Activated T-helper 1 cell treated with anti-CD3 and anti-CD28 coated beads, Interleukin-12 subunit alpha, Interleukin-12 subunit beta, Interleukin-2, Interleukin-4 antibody, amounts not matched to agents 30 ng/mL and 10 ng/mL and 1 ng/mL, durations not matched to agents 14 hours and 24 hours and 36 hours (primary cell): ENCODE measurements at regions of chr6 and their contacts with region 1.

Region 1: GRCh38 chr6:31079656-31080261 is 32.6 kb downstream of the C6orf15 start:
- DNase-seq: peak; percentile 58
- H3K4me3 Mint-ChIP-seq: no peak overlapping the region
- H3K27ac Mint-ChIP-seq: no peak overlapping the region
- H3K4me1 Mint-ChIP-seq: no peaks in the 10 kb centered on the region
- H3K27me3 Mint-ChIP-seq: peaks cover 17% of the 10 kb centered on the region

Region 2: DNA sequence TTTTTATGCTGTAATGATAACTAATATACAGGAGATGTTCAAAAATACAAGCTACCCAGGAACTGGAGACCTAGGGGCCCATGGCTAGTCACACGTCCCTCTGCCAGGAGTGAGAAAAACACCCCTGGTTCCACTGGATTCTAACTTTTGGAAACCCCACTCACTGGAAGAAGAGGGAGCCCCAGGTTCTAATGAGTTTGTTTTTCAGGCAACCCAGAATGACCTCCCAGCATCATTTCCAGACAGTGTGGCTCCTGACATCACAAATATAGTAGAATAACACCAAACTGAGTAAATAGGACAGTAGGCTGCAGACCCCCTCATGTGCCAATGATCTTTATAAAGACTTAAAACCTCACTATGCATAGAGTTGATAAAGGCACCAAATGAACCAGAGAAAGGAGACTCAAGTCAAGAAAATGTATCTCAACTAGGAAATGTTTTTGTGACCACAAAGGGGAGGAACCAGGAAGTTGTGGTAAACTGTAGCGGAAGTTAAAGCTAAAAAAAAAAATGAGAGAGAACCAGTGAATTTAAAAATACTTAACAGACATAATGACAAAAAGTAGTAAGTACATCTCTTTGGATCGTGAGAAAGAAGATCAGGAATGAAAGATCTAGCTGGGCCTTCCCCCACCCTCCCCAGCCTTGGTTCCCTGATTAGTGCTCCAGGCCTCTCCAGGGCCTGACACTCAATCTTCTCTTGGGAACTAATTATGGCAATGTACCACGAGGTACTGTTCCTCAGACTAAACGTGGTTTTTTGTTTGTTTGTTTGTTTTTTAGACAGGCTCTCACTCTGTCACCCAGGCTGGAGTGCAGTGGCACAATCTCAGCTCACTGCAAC is 570.6 kb before region 1 on chr6:
- intact Hi-C with region 1: no loop called
- DNase-seq: peak; percentile 53
- H3K4me3 Mint-ChIP-seq: peak overlapping the region; percentile 19
- H3K27ac Mint-ChIP-seq: peak overlapping the region; percentile 93
- H3K4me1 Mint-ChIP-seq: peaks cover 47% of the 10 kb centered on the region
- H3K27me3 Mint-ChIP-seq: no peaks in the 10 kb centered on the region

Region 3: DNA sequence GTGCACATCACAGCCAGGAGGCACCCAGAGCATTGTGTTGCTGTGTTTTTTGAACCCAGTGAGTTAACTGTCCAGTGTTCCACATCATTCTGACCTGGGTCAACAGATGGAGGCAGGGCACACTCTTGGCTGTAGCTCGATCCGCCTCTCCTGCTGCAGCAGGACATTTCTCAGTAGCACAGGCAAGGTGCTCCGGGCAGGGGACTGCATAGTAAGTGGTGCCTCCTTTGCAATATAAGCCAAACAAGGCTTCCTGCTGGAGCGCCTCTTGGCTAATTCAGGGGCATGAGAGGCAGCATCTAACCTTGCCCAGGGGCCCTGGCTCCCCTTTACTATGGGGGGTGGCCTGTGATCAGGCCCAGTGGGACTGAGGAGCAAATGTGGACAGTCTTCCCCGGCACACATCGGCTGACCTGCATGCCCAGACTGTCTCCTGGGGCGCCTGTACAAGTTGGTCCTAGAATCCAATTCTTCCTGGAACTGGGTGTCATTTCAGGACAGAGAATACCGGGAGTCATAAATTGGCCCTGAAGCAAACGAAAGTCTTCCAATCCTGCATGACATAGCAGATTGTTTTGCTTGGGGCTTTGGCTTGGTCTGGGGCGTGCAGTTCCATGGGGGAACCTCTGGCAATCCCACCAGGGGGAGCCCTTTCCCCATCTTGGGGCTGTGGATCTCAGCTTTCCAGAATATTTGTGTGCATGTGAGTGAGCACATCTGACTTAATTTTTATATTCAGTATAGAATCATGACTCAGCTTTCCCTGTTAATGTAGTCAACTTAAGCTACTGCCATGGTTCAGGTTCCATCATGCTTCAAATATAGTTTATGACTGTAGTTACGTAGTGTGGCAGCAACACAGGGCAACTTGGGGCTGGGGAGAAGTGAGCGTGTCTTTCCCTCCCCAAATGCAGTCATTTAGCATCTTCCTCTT is 251.5 kb before region 1 on chr6:
- intact Hi-C with region 1: loop called (anchors 2 kb)
- DNase-seq: peak; percentile 66
- H3K4me3 Mint-ChIP-seq: peak overlapping the region; percentile 96
- H3K27ac Mint-ChIP-seq: peak overlapping the region; percentile 98
- H3K4me1 Mint-ChIP-seq: peaks cover 65% of the 10 kb centered on the region
- H3K27me3 Mint-ChIP-seq: no peaks in the 10 kb centered on the region